Naive thymus-derived CD4-positive, alpha-beta T cell (primary cell): ENCODE measurements at regions of chr2 and their contacts with region 1.

Region 1: GRCh38 chr2:47906157-47907038 is at the start of gene FBXO11:
- DNase-seq: peak; percentile 80 to 99 (median 96)
- ATAC-seq: peak; percentile 90
- H3K4me3 ChIP-seq: peak within 1 kb of the TSS; percentile 77
- H3K4me3 Mint-ChIP-seq: peak within 1 kb of the TSS; percentile 78 to 97 (median 94)
- H3K27ac ChIP-seq: peak within 1 kb of the TSS; percentile 99
- H3K27ac Mint-ChIP-seq: peak within 1 kb of the TSS; percentile 68 to 97 (median 93)
- H3K4me1 ChIP-seq: peaks cover 14 to 20% of the 10 kb centered on the region in 2 donors
- H3K4me1 Mint-ChIP-seq: peaks cover 24 to 55% (median 51%) of the 10 kb centered on the region in 7 donors
- H3K27me3 ChIP-seq: no peaks in the 10 kb centered on the region
- H3K27me3 Mint-ChIP-seq: no peaks in the 10 kb centered on the region
- total RNA-seq, gene FBXO11: 54.6 to 92.1 (median 85.5) TPM

Region 2: GRCh38 chr2:46915811-46916630 is 990.4 kb before region 1 on chr2:
- CTCF ChIA-PET with region 1: no interaction called
- POLR2A ChIA-PET with region 1: no interaction called
- intact Hi-C with region 1: loop called (anchors 10 kb)
- DNase-seq: peak; percentile 80 to 90 (median 86)
- ATAC-seq: peak; percentile 91
- H3K4me3 ChIP-seq: peak overlapping the region; percentile 94
- H3K4me3 Mint-ChIP-seq: peak overlapping the region; percentile 86 to 98 (median 93)
- H3K27ac ChIP-seq: peak overlapping the region; percentile 98
- H3K27ac Mint-ChIP-seq: peak overlapping the region; percentile 80 to 97 (median 90)
- H3K4me1 ChIP-seq: peaks cover 22 to 26% of the 10 kb centered on the region in 2 donors
- H3K4me1 Mint-ChIP-seq: peaks cover 34 to 67% (median 52%) of the 10 kb centered on the region in 7 donors
- H3K27me3 ChIP-seq: no peaks in the 10 kb centered on the region
- H3K27me3 Mint-ChIP-seq: no peaks in the 10 kb centered on the region

Region 3: GRCh38 chr2:47782671-47783485 is 123.5 kb before region 1 on chr2 and contains the start of gene MSH6:
- CTCF ChIA-PET with region 1: no interaction called
- POLR2A ChIA-PET with region 1: interaction called, 6 read pairs
- intact Hi-C with region 1: loop called (anchors 1 kb)
- DNase-seq: peak; percentile 85 to 93 (median 92)
- ATAC-seq: peak; percentile 97
- H3K4me3 ChIP-seq: peak within 1 kb of the TSS; percentile 97
- H3K4me3 Mint-ChIP-seq: peak within 1 kb of the TSS; percentile 70 to 97 (median 92)
- H3K27ac ChIP-seq: peak within 1 kb of the TSS; percentile 94
- H3K27ac Mint-ChIP-seq: peak within 1 kb of the TSS; percentile 62 to 93 (median 87)
- H3K4me1 ChIP-seq: peaks cover 5 to 8% of the 10 kb centered on the region in 2 donors
- H3K4me1 Mint-ChIP-seq: peaks cover 7 to 39% (median 24%) of the 10 kb centered on the region in 7 donors
- H3K27me3 ChIP-seq: no peaks in the 10 kb centered on the region
- H3K27me3 Mint-ChIP-seq: no peaks in the 10 kb centered on the region
- total RNA-seq, gene MSH6: 20.5 to 82.3 (median 41.8) TPM

Region 4: GRCh38 chr2:47893771-47894170 is 12.6 kb before region 1 on chr2:
- CTCF ChIA-PET with region 1: interaction called, 3 read pairs
- POLR2A ChIA-PET with region 1: interaction called, 5 read pairs
- intact Hi-C with region 1: loop called (anchors 1 kb)
- DNase-seq: no peak
- ATAC-seq: no peak
- H3K4me3 ChIP-seq: no peak overlapping the region
- H3K4me3 Mint-ChIP-seq: peak overlapping the region in 6 of 10 donors; percentile 2 to 54 (median 16)
- H3K27ac ChIP-seq: no peak overlapping the region
- H3K27ac Mint-ChIP-seq: peak overlapping the region in 5 of 9 donors; percentile 0 to 76 (median 29)
- H3K4me1 ChIP-seq: peaks cover 18 to 40% of the 10 kb centered on the region in 2 donors
- H3K4me1 Mint-ChIP-seq: peaks cover 66 to 94% (median 85%) of the 10 kb centered on the region in 7 donors
- H3K27me3 ChIP-seq: no peaks in the 10 kb centered on the region
- H3K27me3 Mint-ChIP-seq: no peaks in the 10 kb centered on the region

Region 5: DNA sequence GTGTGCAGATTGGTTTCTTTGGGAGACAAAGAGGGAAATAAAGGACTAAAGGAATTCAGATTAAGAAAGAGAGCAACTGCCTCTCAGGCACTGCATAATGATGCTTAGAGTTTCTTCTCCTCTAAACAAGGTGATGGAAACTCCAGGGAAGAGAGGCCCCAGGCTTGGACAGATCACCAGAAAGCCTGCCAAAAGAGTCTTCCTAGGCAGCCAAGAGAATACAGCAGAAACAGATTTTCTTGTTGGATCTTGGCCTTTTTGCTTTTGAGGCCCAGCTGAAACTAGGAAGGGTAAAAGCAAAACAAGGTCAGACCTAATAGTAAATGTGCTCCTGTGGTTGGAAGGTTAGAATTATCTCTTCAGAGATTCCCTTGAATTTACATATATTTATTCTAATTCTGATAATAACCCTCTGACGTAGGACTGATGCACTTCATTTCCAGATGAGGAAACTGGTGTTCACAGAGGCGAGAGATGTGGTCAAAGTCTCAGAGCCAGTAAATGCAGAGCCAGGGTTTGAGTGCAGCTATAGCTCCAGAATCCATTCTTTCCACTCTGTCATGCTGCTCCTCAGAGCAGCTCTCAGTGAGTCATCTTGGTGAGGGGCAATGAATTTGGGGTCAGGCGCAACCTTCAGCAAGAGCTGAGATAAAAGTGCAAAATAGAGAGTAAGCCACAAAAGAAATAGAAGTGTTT is 142.2 kb after region 1 on chr2:
- CTCF ChIA-PET with region 1: no interaction called
- POLR2A ChIA-PET with region 1: no interaction called
- intact Hi-C with region 1: no loop called
- DNase-seq: no peak
- ATAC-seq: no peak
- H3K4me3 ChIP-seq: no peak overlapping the region
- H3K4me3 Mint-ChIP-seq: no peak overlapping the region
- H3K27ac ChIP-seq: no peak overlapping the region
- H3K27ac Mint-ChIP-seq: no peak overlapping the region
- H3K4me1 ChIP-seq: no peaks in the 10 kb centered on the region
- H3K4me1 Mint-ChIP-seq: no peaks in the 10 kb centered on the region
- H3K27me3 ChIP-seq: no peaks in the 10 kb centered on the region
- H3K27me3 Mint-ChIP-seq: peaks cover 0 to 15% (median 3%) of the 10 kb centered on the region in 5 donors

Region 6: GRCh38 chr2:48107326-48107925 is 201.0 kb after region 1 on chr2:
- CTCF ChIA-PET with region 1: interaction called, 4 read pairs
- POLR2A ChIA-PET with region 1: interaction called, 3 read pairs
- intact Hi-C with region 1: loop called (anchors 1 kb)
- DNase-seq: no peak
- ATAC-seq: no peak
- H3K4me3 ChIP-seq: no peak overlapping the region
- H3K4me3 Mint-ChIP-seq: no peak overlapping the region
- H3K27ac ChIP-seq: no peak overlapping the region
- H3K27ac Mint-ChIP-seq: no peak overlapping the region
- H3K4me1 ChIP-seq: peaks cover 0 to 3% of the 10 kb centered on the region in 2 donors
- H3K4me1 Mint-ChIP-seq: peaks cover 4 to 26% (median 17%) of the 10 kb centered on the region in 7 donors
- H3K27me3 ChIP-seq: no peaks in the 10 kb centered on the region
- H3K27me3 Mint-ChIP-seq: peaks cover 0 to 9% (median 0%) of the 10 kb centered on the region in 5 donors

Region 7: DNA sequence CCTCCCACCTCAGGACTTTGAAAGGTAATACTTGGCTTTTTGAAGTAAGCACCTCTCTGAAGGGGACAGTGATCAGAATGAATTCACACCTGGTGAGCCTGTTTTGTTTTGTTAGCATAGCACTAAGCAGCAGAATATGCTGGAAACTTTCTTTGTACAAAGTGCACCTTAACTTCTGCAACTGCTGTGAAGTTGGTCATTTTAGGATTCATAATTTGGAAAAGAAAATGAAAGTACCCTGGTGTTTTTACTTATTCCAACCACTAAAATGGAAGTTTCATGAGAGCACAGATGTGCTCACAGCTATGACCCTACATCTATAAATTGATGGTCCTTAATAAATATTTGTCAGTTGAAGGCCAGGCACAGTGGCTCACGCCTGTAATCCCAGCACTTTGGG is 365.8 kb after region 1 on chr2:
- CTCF ChIA-PET with region 1: no interaction called
- POLR2A ChIA-PET with region 1: no interaction called
- intact Hi-C with region 1: no loop called
- DNase-seq: no peak
- ATAC-seq: no peak
- H3K4me3 ChIP-seq: no peak overlapping the region
- H3K4me3 Mint-ChIP-seq: no peak overlapping the region
- H3K27ac ChIP-seq: no peak overlapping the region
- H3K27ac Mint-ChIP-seq: no peak overlapping the region
- H3K4me1 ChIP-seq: no peaks in the 10 kb centered on the region
- H3K4me1 Mint-ChIP-seq: peaks cover 0 to 12% (median 5%) of the 10 kb centered on the region in 7 donors
- H3K27me3 ChIP-seq: no peaks in the 10 kb centered on the region
- H3K27me3 Mint-ChIP-seq: no peaks in the 10 kb centered on the region

Region 8: DNA sequence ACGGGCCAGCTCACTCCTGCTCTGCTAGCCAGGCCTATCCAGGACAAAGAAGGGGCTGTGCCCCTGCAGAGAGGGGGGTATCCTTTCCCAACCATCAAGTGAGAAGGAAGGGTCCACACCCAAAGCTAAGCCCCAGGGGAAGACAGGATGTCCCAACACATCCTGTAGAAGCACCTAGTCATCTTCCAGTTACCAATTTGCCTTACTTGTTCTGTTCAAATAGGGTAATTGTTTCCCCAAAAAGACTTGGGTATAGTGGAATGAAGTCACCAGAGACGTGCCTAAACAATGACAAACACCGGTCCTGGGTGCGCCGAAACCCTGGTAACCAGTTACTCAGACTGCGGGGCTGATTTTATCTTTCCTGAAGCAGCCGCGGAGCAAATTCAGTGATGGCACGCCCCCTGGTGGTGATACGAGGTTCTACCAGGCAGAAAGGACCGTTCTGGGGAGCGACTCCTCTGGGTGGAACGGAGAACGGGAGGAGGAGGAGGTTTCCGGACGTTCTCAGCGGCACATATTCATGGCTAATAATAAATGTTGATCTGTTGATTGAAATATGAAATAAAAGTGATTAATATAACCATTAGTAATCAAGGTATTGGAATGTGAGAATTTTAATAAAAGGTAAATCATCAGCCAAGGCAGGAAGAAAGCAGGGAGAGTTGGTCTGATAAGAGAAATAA is 514.3 kb after region 1 on chr2:
- CTCF ChIA-PET with region 1: interaction called, 3 read pairs
- POLR2A ChIA-PET with region 1: no interaction called
- intact Hi-C with region 1: loop called (anchors 1 kb)
- DNase-seq: peak; percentile 79 to 92 (median 88)
- ATAC-seq: peak; percentile 97
- H3K4me3 ChIP-seq: peak overlapping the region; percentile 33
- H3K4me3 Mint-ChIP-seq: peak overlapping the region in 9 of 10 donors; percentile 16 to 68 (median 49)
- H3K27ac ChIP-seq: peak overlapping the region; percentile 25
- H3K27ac Mint-ChIP-seq: peak overlapping the region in 8 of 9 donors; percentile 52 to 82 (median 72)
- H3K4me1 ChIP-seq: peaks cover 4 to 14% of the 10 kb centered on the region in 2 donors
- H3K4me1 Mint-ChIP-seq: peaks cover 14 to 39% (median 32%) of the 10 kb centered on the region in 7 donors
- H3K27me3 ChIP-seq: no peaks in the 10 kb centered on the region
- H3K27me3 Mint-ChIP-seq: peaks cover 0 to 4% (median 0%) of the 10 kb centered on the region in 5 donors